Mammary epithelial cell (primary cell): ENCODE measurements at regions of chr11 and their contacts with region 1.

Region 1: DNA sequence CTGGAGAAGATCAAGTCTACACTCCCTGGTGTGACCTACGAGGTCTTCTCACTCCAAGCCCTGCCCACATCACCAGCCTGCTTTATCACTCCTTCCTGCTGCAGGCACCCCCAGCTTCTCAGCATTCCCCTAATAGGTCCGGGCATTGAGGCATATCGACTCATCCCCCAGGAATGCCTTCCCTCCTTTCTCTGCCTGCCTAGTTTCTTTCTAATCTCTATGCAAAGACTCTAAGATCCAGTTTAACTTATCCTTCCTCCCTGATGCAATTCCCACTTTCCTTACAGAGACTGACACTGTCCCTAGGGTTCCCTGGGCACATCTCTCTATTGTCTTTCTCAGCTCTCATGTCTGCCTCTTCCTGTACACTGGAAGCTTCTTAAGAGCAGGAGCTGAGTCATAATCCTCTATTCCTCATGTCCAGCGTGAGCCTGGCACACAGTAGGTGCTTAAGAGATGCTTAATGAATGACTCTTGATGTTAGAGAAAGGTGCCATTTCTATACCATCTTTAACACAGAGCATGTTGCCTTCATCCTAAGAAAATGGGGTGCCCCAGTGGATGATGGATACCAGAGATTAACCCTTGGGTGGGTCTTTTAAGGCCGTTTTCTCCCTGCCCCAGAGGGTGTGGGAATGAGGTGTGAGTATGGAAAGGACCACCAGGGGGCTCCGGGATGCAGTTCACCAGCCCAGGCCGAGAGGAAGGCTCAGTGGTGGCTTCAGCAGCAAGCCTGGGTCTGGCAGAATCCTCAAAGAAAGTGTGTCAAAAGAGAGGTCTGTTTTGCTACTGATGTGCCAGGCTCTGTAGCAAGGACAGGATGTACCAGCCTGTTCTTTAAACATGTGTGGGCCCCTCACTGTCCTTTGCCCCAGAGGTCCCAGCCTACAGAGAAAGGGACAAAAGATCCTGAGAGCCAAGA is 34.7 kb downstream of the PARVA start:
- DNase-seq: peak; percentile 86
- H3K4me3 ChIP-seq: no peak overlapping the region
- H3K27ac ChIP-seq: peak overlapping the region; percentile 81
- H3K4me1 ChIP-seq: peaks cover 45% of the 10 kb centered on the region
- H3K27me3 ChIP-seq: no peaks in the 10 kb centered on the region
- CTCF ChIP-seq: peak; percentile 74 to 76

Region 2: GRCh38 chr11:12439615-12440014 is 27.5 kb after region 1 on chr11:
- CTCF ChIA-PET with region 1: no interaction called
- dilution Hi-C with region 1: no loop called
- in situ Hi-C with region 1: no loop called
- intact Hi-C with region 1: no loop called
- DNase-seq: no peak
- H3K4me3 ChIP-seq: no peak overlapping the region
- H3K27ac ChIP-seq: no peak overlapping the region
- H3K4me1 ChIP-seq: no peaks in the 10 kb centered on the region
- H3K27me3 ChIP-seq: no peaks in the 10 kb centered on the region
- CTCF ChIP-seq: no peak

Region 3: GRCh38 chr11:12449961-12450715 is 38.1 kb after region 1 on chr11:
- CTCF ChIA-PET with region 1: no interaction called
- dilution Hi-C with region 1: loop called (anchors 5 kb)
- in situ Hi-C with region 1: no loop called
- intact Hi-C with region 1: loop called (anchors 1 kb)
- DNase-seq: peak; percentile 89
- H3K4me3 ChIP-seq: no peak overlapping the region
- H3K27ac ChIP-seq: peak overlapping the region; percentile 29
- H3K4me1 ChIP-seq: peaks cover 30% of the 10 kb centered on the region
- H3K27me3 ChIP-seq: no peaks in the 10 kb centered on the region
- CTCF ChIP-seq: no peak

Region 4: GRCh38 chr11:12485328-12485727 is 73.3 kb after region 1 on chr11:
- CTCF ChIA-PET with region 1: interaction called, 4 read pairs
- dilution Hi-C with region 1: no loop called
- in situ Hi-C with region 1: no loop called
- intact Hi-C with region 1: loop called (anchors 1 kb)
- DNase-seq: no peak
- H3K4me3 ChIP-seq: no peak overlapping the region
- H3K27ac ChIP-seq: no peak overlapping the region
- H3K4me1 ChIP-seq: no peaks in the 10 kb centered on the region
- H3K27me3 ChIP-seq: no peaks in the 10 kb centered on the region
- CTCF ChIP-seq: peak; percentile 39 to 43

Region 5: DNA sequence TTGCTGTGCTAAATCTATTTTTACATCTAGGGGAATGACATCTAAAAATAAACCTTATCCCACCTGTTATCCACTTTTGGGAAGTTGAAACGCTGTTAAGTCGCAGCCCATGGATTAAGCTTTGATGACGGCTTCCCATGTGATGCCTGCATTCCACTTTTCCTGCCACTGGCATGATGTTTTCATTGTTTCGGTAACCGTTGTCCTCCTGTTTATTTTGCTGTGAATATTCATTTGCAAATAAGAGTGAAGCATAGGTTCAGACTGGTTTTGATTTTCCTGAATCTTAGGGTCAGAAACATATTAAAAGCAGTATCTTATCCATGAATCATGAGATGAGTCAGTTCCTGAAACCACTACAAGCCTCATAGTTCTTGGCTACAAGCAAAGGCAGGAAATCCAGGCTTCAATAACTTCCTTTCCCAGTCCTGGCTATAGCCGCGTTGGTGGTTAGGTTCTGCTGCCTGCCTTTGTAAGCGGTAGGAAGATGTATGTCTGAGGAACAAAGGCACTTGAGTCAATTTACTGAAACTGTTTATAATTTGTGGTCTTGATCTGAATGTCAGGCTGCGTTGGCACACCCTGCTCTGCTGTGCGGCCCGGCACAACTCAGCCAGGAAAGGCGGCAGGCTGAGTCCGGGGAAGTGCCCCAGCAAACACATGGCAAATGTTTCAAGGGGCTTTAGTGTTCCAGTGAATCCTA is 281.6 kb after region 1 on chr11:
- CTCF ChIA-PET with region 1: no interaction called
- dilution Hi-C with region 1: no loop called
- in situ Hi-C with region 1: no loop called
- intact Hi-C with region 1: loop called (anchors 5 kb)
- DNase-seq: peak; percentile 99
- H3K4me3 ChIP-seq: peak overlapping the region; percentile 25 to 26 (median 26)
- H3K27ac ChIP-seq: peak overlapping the region; percentile 98
- H3K4me1 ChIP-seq: peaks cover 79% of the 10 kb centered on the region
- H3K27me3 ChIP-seq: no peaks in the 10 kb centered on the region
- CTCF ChIP-seq: no peak

Region 6: GRCh38 chr11:12888525-12889158 is 476.6 kb after region 1 on chr11:
- CTCF ChIA-PET with region 1: no interaction called
- dilution Hi-C with region 1: no loop called
- in situ Hi-C with region 1: loop called in 1 of 2 experiments (anchors 25 kb)
- intact Hi-C with region 1: loop called (anchors 1 kb)
- DNase-seq: peak; percentile 69
- H3K4me3 ChIP-seq: no peak overlapping the region
- H3K27ac ChIP-seq: no peak overlapping the region
- H3K4me1 ChIP-seq: peaks cover 16% of the 10 kb centered on the region
- H3K27me3 ChIP-seq: no peaks in the 10 kb centered on the region
- CTCF ChIP-seq: peak; percentile 69 to 77